Activated T-helper 1 cell treated with anti-CD3 and anti-CD28 coated beads, Interleukin-12 subunit alpha, Interleukin-12 subunit beta, Interleukin-2, Interleukin-4 antibody, amounts not matched to agents 30 ng/mL and 10 ng/mL and 1 ng/mL, durations not matched to agents 14 hours and 24 hours and 36 hours (primary cell): ENCODE measurements at regions of chr1 and their contacts with region 1.

Region 1: GRCh38 chr1:16236511-16237342 is at the start of gene CPLANE2:
- DNase-seq: peak; percentile 96
- H3K4me3 Mint-ChIP-seq: peak within 1 kb of the TSS; percentile 83
- H3K27ac Mint-ChIP-seq: peak within 1 kb of the TSS; percentile 87
- H3K4me1 Mint-ChIP-seq: peaks cover 26% of the 10 kb centered on the region
- H3K27me3 Mint-ChIP-seq: no peaks in the 10 kb centered on the region
- total RNA-seq, gene CPLANE2: 3.8 and 4.1 TPM in 2 replicates

Region 2: DNA sequence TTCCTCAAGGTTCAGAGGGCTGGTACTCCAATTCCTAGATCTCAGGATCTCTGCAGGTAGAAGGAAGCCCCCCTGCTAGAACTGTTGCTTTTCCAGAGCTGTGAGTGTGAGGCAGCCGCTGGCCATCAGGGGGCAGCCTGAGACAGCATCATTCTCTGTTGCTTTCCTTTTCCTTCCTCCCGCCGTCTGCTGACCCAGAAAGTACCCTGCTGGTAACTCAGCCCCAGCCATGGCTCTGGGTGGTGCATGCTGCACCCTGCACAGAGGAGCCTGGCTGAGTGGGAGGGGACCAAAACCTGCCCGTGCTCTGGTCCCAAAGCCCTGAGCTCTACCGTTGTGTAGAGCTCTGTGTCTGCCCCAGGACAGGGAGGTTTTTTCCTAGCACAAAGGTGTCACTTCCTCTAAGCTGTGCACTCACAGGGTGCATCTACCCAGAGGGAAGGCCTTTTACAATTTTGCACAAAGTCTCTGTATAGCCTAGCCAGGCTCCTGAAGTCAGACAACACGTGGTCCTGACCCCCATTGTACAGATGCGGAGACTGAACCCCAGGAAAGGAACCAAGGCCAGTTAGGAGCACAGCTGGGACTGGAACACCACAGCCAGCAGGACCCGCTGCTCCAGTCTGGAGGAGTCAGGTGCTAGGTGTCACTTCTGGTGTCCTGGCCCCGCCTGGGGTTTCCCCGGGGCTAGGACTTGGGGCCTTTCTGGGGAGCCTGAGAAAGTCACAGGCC is 157.6 kb before region 1 on chr1:
- intact Hi-C with region 1: loop called (anchors 2 kb)
- DNase-seq: peak; percentile 69
- H3K4me3 Mint-ChIP-seq: peak overlapping the region; percentile 69
- H3K27ac Mint-ChIP-seq: peak overlapping the region; percentile 84
- H3K4me1 Mint-ChIP-seq: peaks cover 13% of the 10 kb centered on the region
- H3K27me3 Mint-ChIP-seq: peaks cover 4% of the 10 kb centered on the region

Region 3: DNA sequence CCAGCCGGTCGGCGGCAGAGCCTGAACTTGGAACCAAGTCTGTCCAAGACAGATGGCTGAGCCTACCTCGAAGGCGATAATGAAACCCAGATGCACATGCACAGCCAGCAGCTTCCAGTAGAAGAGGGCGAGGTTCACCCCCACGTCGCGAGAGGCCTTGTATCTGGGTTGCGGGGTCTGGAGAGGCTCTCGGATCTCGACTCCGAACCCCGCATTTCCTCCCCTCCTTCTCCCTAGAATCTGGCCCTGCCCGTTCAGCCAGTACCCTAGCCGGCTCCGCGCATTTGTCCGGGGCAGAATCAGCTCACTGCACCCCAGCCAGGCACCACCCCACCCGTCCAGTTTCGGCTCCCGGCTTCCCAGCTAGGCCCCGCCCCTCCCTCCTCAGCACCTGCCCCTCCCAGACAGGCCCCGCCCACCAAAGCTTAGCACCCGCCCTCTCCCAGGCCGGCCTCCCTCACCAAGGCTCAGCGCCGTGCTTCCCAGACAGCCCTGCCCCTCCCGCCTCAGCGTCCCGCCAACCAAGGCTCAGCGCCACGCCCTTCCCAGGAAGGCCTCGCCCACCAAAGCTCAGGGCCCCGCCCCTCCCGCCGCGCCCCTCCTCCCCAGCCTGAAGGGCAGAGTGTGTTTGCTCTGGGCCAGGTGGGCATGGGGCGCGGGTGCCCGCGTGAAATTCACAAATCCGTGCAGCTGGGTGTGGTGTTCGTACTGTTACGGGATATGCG is 19.5 kb before region 1 on chr1:
- intact Hi-C with region 1: loop called (anchors 1 kb)
- DNase-seq: peak; percentile 92
- H3K4me3 Mint-ChIP-seq: peak overlapping the region; percentile 83
- H3K27ac Mint-ChIP-seq: no peak overlapping the region
- H3K4me1 Mint-ChIP-seq: peaks cover 22% of the 10 kb centered on the region
- H3K27me3 Mint-ChIP-seq: peaks cover 4% of the 10 kb centered on the region

Region 4: GRCh38 chr1:16300436-16300835 is 63.7 kb after region 1 on chr1:
- intact Hi-C with region 1: no loop called
- DNase-seq: no peak
- H3K4me3 Mint-ChIP-seq: no peak overlapping the region
- H3K27ac Mint-ChIP-seq: no peak overlapping the region
- H3K4me1 Mint-ChIP-seq: peaks cover 4% of the 10 kb centered on the region
- H3K27me3 Mint-ChIP-seq: no peaks in the 10 kb centered on the region

Region 5: GRCh38 chr1:16351994-16352841 is 115.5 kb after region 1 on chr1 and contains the start of gene FBXO42:
- intact Hi-C with region 1: loop called (anchors 5 kb)
- DNase-seq: peak; percentile 94
- H3K4me3 Mint-ChIP-seq: peak within 1 kb of the TSS; percentile 97
- H3K27ac Mint-ChIP-seq: peak within 1 kb of the TSS; percentile 88
- H3K4me1 Mint-ChIP-seq: peaks cover 29% of the 10 kb centered on the region
- H3K27me3 Mint-ChIP-seq: no peaks in the 10 kb centered on the region
- total RNA-seq, gene FBXO42: 17.1 and 19.1 TPM in 2 replicates